ENCODE measurements at regions of chr6 and their contacts with region 1.

Region 1: DNA sequence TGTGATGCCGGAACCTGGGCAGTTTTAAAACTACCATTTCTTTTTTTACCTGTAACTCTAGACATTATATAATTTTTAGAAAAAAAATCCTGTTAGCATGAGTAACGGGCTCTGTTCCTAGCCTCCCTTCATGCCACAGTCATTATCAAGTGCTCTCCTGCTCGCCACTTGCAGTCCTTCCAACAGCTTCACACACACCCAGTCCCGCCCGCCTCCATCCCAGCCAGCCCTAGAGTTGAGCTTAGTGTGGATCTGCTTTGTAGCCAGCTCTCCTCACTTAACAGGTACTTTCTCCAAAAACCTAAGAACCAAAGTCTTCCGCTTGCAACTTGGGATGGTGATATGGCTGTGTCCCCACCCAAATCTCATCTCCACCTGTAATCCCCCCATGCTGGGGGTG is 51.5 kb downstream of the EZR start:
- DNase-seq: no peak
- ATAC-seq: no peak
- H3K4me3 ChIP-seq: no peak overlapping the region
- H3K4me3 Mint-ChIP-seq: no peak overlapping the region
- H3K27ac ChIP-seq: no peak overlapping the region
- H3K27ac Mint-ChIP-seq: peak overlapping the region; percentile 16 to 62
- H3K4me1 ChIP-seq: peaks cover 6 to 26% of the 10 kb centered on the region in 2 experiments
- H3K4me1 Mint-ChIP-seq: peaks cover 22 to 35% (median 22%) of the 10 kb centered on the region in 3 donors
- H3K27me3 ChIP-seq: no peaks in the 10 kb centered on the region
- H3K27me3 Mint-ChIP-seq: no peaks in the 10 kb centered on the region

Region 2: DNA sequence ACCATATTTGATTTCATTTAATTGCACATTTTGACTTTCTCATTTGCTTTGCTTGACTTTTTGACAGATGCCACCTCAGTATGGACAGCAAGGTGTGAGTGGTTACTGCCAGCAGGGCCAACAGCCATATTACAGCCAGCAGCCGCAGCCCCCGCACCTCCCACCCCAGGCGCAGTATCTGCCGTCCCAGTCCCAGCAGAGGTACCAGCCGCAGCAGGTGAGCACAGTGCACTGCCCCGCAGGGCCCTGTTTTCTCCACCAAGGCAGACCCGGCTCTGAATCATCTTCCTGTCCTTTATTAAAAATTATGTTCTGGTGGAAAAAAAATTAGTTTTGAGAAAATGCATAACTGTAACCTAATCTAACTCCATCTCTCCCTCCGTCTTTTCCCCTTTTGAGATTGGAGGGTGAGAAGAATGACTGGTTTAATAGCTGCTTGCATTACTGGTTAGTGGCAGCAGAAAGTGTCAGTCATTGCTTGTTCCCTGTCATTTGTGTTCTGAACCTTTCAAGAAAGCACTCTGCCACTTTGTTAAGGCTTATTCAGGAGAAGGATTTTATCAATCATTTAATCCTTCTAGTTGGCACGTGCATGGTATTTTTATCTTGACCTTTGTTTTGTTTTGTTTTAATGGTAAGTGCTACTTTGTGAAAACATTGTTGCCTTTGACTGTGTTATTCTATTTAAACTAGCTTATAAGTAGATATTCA is 1866.2 kb before region 1 on chr6:
- CTCF ChIA-PET with region 1: no interaction called
- POLR2A ChIA-PET with region 1: no interaction called
- DNase-seq: no peak
- ATAC-seq: no peak
- H3K4me3 ChIP-seq: no peak overlapping the region
- H3K4me3 Mint-ChIP-seq: no peak overlapping the region
- H3K27ac ChIP-seq: no peak overlapping the region
- H3K27ac Mint-ChIP-seq: peak overlapping the region in 1 of 2 donors; percentile 62
- H3K4me1 ChIP-seq: peaks cover 16% of the 10 kb centered on the region in 2 experiments
- H3K4me1 Mint-ChIP-seq: peaks cover 63 to 72% (median 69%) of the 10 kb centered on the region in 3 donors
- H3K27me3 ChIP-seq: no peaks in the 10 kb centered on the region
- H3K27me3 Mint-ChIP-seq: no peaks in the 10 kb centered on the region

Region 3: DNA sequence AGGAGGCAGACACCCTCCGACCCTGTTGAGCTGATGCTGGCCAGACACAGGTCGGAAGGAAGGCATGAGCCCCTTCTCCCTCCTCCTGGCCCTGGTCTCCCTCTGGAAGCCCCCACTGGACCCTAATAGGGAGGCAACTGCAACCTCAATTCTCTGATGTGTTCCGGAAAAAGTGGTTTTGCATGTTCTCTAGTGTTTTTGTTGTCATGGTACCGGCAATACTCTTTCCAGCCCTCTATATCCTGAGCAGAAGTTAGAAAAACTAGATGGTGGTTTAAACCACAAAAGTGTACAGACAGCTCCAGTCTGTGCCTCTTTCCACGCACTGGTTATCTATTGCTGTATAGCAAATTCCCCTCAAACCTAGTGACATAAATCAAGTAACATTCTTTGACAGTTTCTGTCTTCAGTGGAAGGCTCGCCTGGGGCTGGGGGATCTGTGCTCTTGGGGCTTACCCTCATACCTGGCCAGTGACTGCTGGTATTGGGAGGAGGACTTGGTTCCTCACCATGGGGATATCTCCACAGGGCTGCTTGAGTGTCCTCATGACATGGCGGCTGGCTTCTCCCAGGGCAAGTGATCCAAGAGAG is 80.8 kb before region 1 on chr6:
- CTCF ChIA-PET with region 1: no interaction called
- POLR2A ChIA-PET with region 1: no interaction called
- DNase-seq: peak in 33 of 35 experiments; percentile 21 to 89 (median 61)
- ATAC-seq: peak; percentile 82 to 94 (median 93)
- H3K4me3 ChIP-seq: peak overlapping the region; percentile 14 to 29
- H3K4me3 Mint-ChIP-seq: peak overlapping the region; percentile 26 to 73 (median 28)
- H3K27ac ChIP-seq: peak overlapping the region; percentile 94
- H3K27ac Mint-ChIP-seq: peak overlapping the region; percentile 87 to 93
- H3K4me1 ChIP-seq: peaks cover 39 to 53% of the 10 kb centered on the region in 2 experiments
- H3K4me1 Mint-ChIP-seq: peaks cover 67 to 72% (median 70%) of the 10 kb centered on the region in 3 donors
- H3K27me3 ChIP-seq: no peaks in the 10 kb centered on the region
- H3K27me3 Mint-ChIP-seq: no peaks in the 10 kb centered on the region

Region 4: GRCh38 chr6:158819213-158819909 is 51.7 kb after region 1 on chr6 and contains the start of gene EZR:
- CTCF ChIA-PET with region 1: no interaction called
- POLR2A ChIA-PET with region 1: no interaction called
- DNase-seq: peak; percentile 69 to 92 (median 83)
- ATAC-seq: peak; percentile 60 to 75 (median 66)
- H3K4me3 ChIP-seq: peak within 1 kb of the TSS; percentile 83 to 88
- H3K4me3 Mint-ChIP-seq: peak within 1 kb of the TSS; percentile 77 to 98 (median 98)
- H3K27ac ChIP-seq: peak within 1 kb of the TSS; percentile 98
- H3K27ac Mint-ChIP-seq: peak within 1 kb of the TSS; percentile 85 to 87
- H3K4me1 ChIP-seq: peaks cover 17 to 32% of the 10 kb centered on the region in 2 experiments
- H3K4me1 Mint-ChIP-seq: peaks cover 35 to 49% (median 36%) of the 10 kb centered on the region in 3 donors
- H3K27me3 ChIP-seq: no peaks in the 10 kb centered on the region
- H3K27me3 Mint-ChIP-seq: no peaks in the 10 kb centered on the region
- total RNA-seq, gene EZR: 176 to 286 (median 272) TPM

Region 5: DNA sequence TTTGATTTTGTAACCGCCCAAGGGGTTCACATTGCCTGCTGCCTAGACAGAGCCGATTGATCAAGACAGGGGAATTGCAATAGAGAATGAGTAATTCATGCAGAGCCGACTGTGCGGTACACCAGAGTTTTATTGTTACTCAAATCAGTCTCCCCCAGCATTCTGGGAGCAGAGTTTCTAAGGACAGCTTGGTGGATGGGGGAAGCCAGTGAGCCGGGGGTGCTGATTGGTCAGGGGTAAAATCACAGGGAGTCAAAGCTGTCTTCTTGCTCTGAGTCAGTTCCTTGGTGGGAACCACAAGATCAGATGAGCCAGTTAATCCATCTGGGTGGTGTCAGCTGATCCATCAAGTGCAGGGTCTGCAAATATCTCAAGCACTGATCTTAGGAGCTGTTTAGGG is 111.5 kb after region 1 on chr6:
- CTCF ChIA-PET with region 1: no interaction called
- POLR2A ChIA-PET with region 1: interaction called in 1 of 2 experiments, 12 read pairs
- DNase-seq: no peak
- ATAC-seq: no peak
- H3K4me3 ChIP-seq: no peak overlapping the region
- H3K4me3 Mint-ChIP-seq: no peak overlapping the region
- H3K27ac ChIP-seq: no peak overlapping the region
- H3K27ac Mint-ChIP-seq: peak overlapping the region in 1 of 2 donors; percentile 21
- H3K4me1 ChIP-seq: no peaks in the 10 kb centered on the region
- H3K4me1 Mint-ChIP-seq: peaks cover 0 to 8% (median 6%) of the 10 kb centered on the region in 3 donors
- H3K27me3 ChIP-seq: no peaks in the 10 kb centered on the region
- H3K27me3 Mint-ChIP-seq: no peaks in the 10 kb centered on the region

Region 6: GRCh38 chr6:158894193-158894592 is 126.5 kb after region 1 on chr6:
- CTCF ChIA-PET with region 1: no interaction called
- POLR2A ChIA-PET with region 1: no interaction called
- DNase-seq: no peak
- ATAC-seq: no peak
- H3K4me3 ChIP-seq: no peak overlapping the region
- H3K4me3 Mint-ChIP-seq: no peak overlapping the region
- H3K27ac ChIP-seq: no peak overlapping the region
- H3K27ac Mint-ChIP-seq: no peak overlapping the region
- H3K4me1 ChIP-seq: no peaks in the 10 kb centered on the region
- H3K4me1 Mint-ChIP-seq: no peaks in the 10 kb centered on the region
- H3K27me3 ChIP-seq: no peaks in the 10 kb centered on the region
- H3K27me3 Mint-ChIP-seq: no peaks in the 10 kb centered on the region